RWPE1 (cell line): ENCODE measurements at regions of chr3 and their contacts with region 1.

Region 1: GRCh38 chr3:101803173-101803782 is 24.3 kb downstream of the NXPE3 start:
- DNase-seq: peak; percentile 62
- H3K27ac ChIP-seq: no peak overlapping the region
- CTCF ChIP-seq: peak; percentile 89

Region 2: DNA sequence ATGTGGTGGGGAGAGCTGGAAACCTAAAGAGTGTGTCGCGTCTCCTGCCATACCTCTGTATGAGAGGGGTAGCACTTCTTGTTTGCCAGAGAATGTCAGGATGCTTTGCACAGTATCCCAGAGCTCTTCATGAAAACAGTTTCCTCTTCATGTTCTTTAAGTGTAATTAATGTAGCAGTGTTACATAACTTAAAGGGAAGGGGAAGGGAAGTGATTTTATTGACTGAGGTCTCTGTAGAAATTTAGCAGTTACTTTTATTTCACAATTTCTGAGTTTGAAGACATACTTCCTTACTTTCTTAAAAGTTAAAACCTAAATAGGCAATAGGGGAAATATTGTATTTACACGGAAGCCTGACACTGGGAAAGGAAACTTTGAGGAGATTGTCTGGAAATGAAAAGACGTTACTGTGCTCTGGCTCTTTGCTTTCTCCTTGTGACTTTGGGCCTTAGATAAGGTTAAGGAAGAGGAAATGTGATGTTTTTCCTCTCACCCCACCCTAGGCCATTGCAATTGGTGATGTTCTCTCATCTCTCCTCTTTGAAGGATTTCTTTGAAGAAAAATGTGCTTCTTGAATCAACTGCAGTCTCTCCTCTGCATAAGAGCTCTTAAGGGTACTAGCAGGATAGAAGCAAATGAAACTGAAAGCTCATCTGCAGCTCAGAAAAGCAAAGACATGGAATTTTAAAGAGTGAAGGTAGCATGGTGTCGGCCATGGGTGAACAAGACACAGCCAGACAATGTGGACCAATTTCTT is 18.2 kb before region 1 on chr3:
- CTCF ChIA-PET with region 1: interaction called, 12 read pairs
- POLR2A ChIA-PET with region 1: no interaction called
- DNase-seq: no peak
- H3K27ac ChIP-seq: no peak overlapping the region
- CTCF ChIP-seq: no peak